ENCODE measurements at regions of chr1 and their contacts with region 1.

Region 1: DNA sequence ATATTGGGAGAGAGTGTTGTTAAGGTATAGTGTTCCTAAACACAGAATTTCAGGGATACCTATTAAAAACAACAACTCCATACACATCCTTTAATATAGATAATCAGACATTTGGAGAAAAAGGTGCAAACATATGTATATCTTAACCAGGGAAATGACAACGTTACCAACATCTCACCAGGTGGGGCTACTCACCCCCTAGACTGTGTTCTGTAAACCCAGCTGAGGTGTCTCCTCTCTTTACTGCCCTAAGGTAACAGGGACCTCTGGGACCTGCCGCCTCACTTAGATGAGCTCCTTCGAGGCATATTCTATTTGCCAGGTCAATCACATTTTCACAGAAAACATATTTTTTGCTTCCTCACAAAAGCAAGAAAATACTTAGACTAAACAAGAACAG is 13.4 kb downstream of the RRAGC start:
- DNase-seq: no peak
- ATAC-seq: no peak
- H3K4me3 Mint-ChIP-seq: no peak overlapping the region
- H3K27ac Mint-ChIP-seq: no peak overlapping the region
- H3K4me1 Mint-ChIP-seq: no peaks in the 10 kb centered on the region
- H3K27me3 Mint-ChIP-seq: no peaks in the 10 kb centered on the region

Region 2: GRCh38 chr1:38834937-38835827 is 11.0 kb before region 1 on chr1:
- CTCF ChIA-PET with region 1: interaction called, 21 read pairs
- POLR2A ChIA-PET with region 1: no interaction called
- DNase-seq: peak; percentile 73
- ATAC-seq: peak; percentile 92
- H3K4me3 Mint-ChIP-seq: no peak overlapping the region
- H3K27ac Mint-ChIP-seq: no peak overlapping the region
- H3K4me1 Mint-ChIP-seq: no peaks in the 10 kb centered on the region
- H3K27me3 Mint-ChIP-seq: peaks cover 19% of the 10 kb centered on the region

Measured in activated CD8-positive, alpha-beta T cell treated with anti-CD3 and anti-CD28 coated beads, Interleukin-2, amount 10 ng/mL, durations not matched to agents 7 days and 5 days (primary cell).